WTC11 (cell line): ENCODE measurements at regions of chr3 and their contacts with region 1.

Region 1: DNA sequence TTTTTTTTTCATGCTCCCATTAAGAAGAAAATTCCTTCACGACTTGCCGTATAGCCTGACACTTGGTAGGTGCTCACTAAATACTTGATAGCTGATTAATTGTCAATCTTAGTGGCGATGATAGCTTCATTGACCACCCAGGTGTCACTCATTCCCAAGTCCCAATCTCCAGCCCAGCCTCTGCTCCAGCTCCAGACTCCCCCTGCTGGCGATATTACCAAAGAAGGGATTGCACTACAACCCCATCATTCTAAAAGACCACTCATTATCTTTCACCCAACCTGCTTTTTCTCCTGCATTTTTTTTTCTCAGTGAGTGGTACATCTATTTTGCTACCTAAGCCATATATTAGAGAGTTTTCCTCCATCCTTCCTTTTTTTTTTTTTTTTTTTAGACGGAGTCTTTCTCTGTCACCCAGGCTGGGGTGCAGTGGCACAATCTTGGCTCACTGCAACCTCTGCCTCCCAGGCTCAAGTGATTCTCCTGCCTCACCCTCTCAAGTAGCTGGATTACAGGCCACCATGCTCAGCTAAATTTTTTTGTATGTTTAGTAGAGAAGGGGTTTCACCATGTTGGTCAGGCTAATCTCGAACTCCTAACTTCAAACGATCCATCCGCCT is 19.5 kb upstream of the COMMD2 start:
- DNase-seq: peak; percentile 74
- ATAC-seq: peak; percentile 87
- H3K4me3 Mint-ChIP-seq: no peak overlapping the region
- H3K27ac Mint-ChIP-seq: no peak overlapping the region
- H3K4me1 Mint-ChIP-seq: peaks cover 12% of the 10 kb centered on the region
- H3K27me3 Mint-ChIP-seq: no peaks in the 10 kb centered on the region
- CTCF ChIP-seq: peak; percentile 76

Region 2: DNA sequence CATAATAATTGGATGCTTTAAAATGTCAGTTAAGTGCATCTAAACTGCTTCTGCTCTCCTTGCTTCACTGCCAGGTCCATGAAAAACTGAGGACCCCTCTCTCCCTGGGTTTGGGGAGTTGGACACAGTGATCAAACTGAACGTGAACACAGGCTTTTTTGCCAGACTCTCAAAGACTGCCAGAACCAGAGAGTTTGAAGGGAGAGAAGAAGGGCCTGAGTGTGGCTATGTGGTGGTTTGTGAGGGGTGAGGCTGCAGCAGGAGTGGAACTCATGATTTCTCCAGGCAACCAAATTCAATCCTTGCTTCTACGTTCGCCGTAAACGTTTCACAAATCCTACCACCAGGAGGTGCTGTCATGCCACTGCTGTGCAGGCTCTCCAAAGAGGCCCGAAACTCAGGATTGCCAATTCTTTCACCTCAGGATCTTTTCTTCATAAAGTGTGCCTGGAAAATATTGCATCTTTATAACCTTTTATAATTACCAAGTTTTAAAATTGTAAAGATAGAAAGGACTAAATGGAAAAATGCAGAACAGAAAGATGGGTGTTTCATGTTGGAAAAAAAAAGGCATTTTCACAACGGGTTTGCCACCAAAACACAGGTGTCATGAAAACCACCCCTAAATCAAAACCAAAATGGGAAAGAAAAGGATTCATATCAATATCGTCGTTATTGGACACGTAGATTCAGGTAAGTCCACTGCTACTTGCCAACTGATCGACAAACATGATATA is 277.6 kb before region 1 on chr3:
- CTCF ChIA-PET with region 1: interaction called, 13 read pairs
- POLR2A ChIA-PET with region 1: no interaction called
- DNase-seq: peak; percentile 82
- ATAC-seq: peak; percentile 87
- H3K4me3 Mint-ChIP-seq: no peak overlapping the region
- H3K27ac Mint-ChIP-seq: no peak overlapping the region
- H3K4me1 Mint-ChIP-seq: peaks cover 7% of the 10 kb centered on the region; the same call in 1 of the 2 replicates
- H3K27me3 Mint-ChIP-seq: no peaks in the 10 kb centered on the region; the same call in 1 of the 2 replicates
- CTCF ChIP-seq: peak; percentile 64; the same call in 1 of the 2 replicates

Region 3: DNA sequence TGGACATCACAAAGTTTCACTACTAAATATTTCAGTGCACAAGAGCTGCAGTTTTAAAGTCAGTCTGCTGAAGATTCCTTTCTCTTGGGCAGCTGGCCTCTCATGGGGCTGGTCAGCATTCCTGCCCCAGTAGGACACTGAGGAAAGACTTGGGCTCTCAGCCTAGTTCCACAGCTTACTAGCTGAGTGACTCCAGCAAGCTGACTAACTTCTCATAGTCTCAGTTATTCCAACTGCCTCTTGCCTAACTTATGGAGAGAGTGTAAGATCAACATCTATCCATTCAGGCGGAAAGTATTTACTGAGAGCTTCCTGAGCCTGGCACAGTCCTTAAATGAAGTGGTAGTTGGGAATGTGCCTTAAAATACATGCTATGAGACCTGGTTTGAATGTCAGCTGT is 270.2 kb before region 1 on chr3:
- CTCF ChIA-PET with region 1: interaction called, 10 read pairs
- POLR2A ChIA-PET with region 1: no interaction called
- DNase-seq: no peak
- ATAC-seq: no peak
- H3K4me3 Mint-ChIP-seq: no peak overlapping the region
- H3K27ac Mint-ChIP-seq: no peak overlapping the region
- H3K4me1 Mint-ChIP-seq: peaks cover 4% of the 10 kb centered on the region
- H3K27me3 Mint-ChIP-seq: no peaks in the 10 kb centered on the region; the same call in 1 of the 2 replicates
- CTCF ChIP-seq: no peak

Region 4: GRCh38 chr3:149527531-149528339 is 244.0 kb before region 1 on chr3:
- CTCF ChIA-PET with region 1: interaction called, 15 read pairs
- POLR2A ChIA-PET with region 1: no interaction called
- DNase-seq: no peak
- ATAC-seq: peak; percentile 71
- H3K4me3 Mint-ChIP-seq: no peak overlapping the region
- H3K27ac Mint-ChIP-seq: peak overlapping the region; percentile 23; the same call in 1 of the 2 replicates
- H3K4me1 Mint-ChIP-seq: peaks cover 14% of the 10 kb centered on the region
- H3K27me3 Mint-ChIP-seq: no peaks in the 10 kb centered on the region
- CTCF ChIP-seq: no peak

Region 5: DNA sequence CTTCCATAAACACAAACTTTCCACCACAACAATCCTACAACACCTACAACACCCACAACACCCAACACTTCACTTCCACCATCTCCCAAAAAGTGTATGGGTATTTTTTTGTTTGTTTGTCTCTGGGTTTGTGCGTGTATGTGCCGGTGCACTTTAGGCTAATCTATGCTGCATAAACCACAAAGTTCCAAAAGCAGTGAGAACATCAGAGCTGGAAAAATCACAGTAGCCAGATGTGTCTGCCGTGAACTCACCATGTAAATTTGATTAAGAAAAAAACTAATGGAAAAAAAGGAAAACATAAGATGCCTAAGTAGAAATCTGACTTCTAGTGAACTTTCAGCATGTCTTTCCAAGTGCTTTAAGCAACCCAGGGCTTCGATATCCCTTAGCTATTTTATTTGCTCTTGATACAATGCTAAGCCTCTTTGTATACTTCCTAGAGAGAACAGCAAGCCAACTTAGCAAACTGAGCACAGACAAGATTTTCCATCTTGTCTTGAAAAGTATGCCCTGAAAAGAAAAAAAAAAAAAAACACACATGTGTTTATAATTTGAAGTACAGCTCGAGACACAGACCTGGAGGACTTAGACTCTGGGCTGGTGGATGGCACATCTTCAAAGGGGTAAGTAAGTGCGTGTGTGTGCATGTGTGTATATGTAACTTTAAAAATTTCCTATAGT is 205.3 kb before region 1 on chr3:
- CTCF ChIA-PET with region 1: interaction called, 18 read pairs
- POLR2A ChIA-PET with region 1: no interaction called
- DNase-seq: no peak
- ATAC-seq: no peak
- H3K4me3 Mint-ChIP-seq: no peak overlapping the region
- H3K27ac Mint-ChIP-seq: peak overlapping the region; percentile 61
- H3K4me1 Mint-ChIP-seq: peaks cover 31% of the 10 kb centered on the region
- H3K27me3 Mint-ChIP-seq: no peaks in the 10 kb centered on the region
- CTCF ChIP-seq: no peak

Region 6: DNA sequence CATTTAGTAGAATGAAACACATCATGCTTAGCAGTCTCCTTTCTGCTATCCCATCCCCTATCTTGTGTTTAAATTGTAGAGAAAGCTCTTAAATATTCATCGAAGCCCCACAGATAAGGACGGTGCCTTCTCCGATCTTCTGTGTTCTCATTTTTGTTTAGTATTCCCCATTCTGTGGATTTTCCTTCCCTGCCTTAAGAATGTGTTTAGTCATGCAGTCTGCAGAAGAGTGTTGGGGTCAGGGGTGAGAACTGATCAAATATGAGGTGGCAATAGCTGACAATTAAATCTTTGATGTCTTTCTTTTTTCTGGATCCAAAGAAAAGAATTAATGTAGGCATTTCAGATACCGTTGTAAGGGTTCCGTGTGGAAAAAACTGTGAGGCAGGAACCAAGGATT is 29.9 kb after region 1 on chr3:
- CTCF ChIA-PET with region 1: interaction called, 13 read pairs
- POLR2A ChIA-PET with region 1: no interaction called
- DNase-seq: no peak
- ATAC-seq: no peak
- H3K4me3 Mint-ChIP-seq: no peak overlapping the region
- H3K27ac Mint-ChIP-seq: no peak overlapping the region
- H3K4me1 Mint-ChIP-seq: no peaks in the 10 kb centered on the region
- H3K27me3 Mint-ChIP-seq: peaks cover 7% of the 10 kb centered on the region; the same call in 1 of the 2 replicates
- CTCF ChIP-seq: no peak

Region 7: DNA sequence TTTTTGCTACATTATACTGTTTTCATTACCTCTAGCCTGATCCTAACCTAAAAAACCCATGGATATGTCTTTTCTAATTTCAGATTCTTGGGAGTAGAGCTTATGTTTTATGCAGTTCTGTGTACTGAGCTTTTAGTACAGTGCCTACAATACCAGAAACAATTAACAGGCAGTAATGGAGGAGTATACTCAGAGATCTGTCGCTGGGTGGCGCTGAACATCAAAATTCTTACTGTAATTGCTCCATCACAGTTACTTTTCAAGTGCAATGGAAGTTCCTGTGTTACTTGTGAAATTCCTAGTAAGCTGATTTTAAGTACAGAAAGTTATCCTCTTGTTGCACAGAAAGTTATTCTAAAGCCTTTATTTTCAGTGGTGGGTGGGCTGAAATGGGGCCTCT is 108.1 kb after region 1 on chr3:
- CTCF ChIA-PET with region 1: interaction called, 11 read pairs
- POLR2A ChIA-PET with region 1: no interaction called
- DNase-seq: peak; percentile 63
- ATAC-seq: peak; percentile 90
- H3K4me3 Mint-ChIP-seq: no peak overlapping the region
- H3K27ac Mint-ChIP-seq: no peak overlapping the region
- H3K4me1 Mint-ChIP-seq: no peaks in the 10 kb centered on the region
- H3K27me3 Mint-ChIP-seq: no peaks in the 10 kb centered on the region
- CTCF ChIP-seq: peak; percentile 47; the same call in 1 of the 2 replicates